Activated CD4-positive, alpha-beta T cell treated with anti-CD3 and anti-CD28 coated beads, Interleukin-2, amount 10 ng/mL, durations not matched to agents 24 days and 14 days (primary cell): ENCODE measurements at regions of chr1 and their contacts with region 1.

Region 1: DNA sequence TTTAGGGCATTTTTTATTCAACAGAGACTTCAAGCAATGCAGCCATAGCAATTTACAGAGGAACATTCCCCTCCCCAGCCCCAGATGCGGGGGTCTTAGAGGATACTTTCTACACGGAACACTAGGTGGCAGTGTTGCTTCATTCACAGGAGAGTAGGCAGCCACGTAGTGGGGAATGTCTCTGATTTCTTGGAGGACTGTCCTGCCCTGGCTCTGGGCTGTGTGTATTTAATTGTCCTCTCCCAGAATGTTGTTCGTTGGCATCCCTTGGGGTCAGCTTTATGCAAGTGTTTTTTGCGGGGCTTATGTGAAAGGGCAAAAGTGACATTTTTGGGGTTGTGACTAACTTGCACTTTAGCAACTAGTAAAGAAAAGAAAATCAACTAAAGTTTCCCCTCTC is 96.9 kb downstream of the PAPPA2 start:
- DNase-seq: peak; percentile 71
- H3K4me3 Mint-ChIP-seq: no peak overlapping the region
- H3K27ac Mint-ChIP-seq: no peak overlapping the region
- H3K4me1 Mint-ChIP-seq: no peaks in the 10 kb centered on the region
- H3K27me3 Mint-ChIP-seq: no peaks in the 10 kb centered on the region

Region 2: GRCh38 chr1:176225911-176226310 is 334.0 kb before region 1 on chr1:
- intact Hi-C with region 1: no loop called
- DNase-seq: no peak
- H3K4me3 Mint-ChIP-seq: no peak overlapping the region
- H3K27ac Mint-ChIP-seq: no peak overlapping the region
- H3K4me1 Mint-ChIP-seq: no peaks in the 10 kb centered on the region
- H3K27me3 Mint-ChIP-seq: no peaks in the 10 kb centered on the region

Region 3: DNA sequence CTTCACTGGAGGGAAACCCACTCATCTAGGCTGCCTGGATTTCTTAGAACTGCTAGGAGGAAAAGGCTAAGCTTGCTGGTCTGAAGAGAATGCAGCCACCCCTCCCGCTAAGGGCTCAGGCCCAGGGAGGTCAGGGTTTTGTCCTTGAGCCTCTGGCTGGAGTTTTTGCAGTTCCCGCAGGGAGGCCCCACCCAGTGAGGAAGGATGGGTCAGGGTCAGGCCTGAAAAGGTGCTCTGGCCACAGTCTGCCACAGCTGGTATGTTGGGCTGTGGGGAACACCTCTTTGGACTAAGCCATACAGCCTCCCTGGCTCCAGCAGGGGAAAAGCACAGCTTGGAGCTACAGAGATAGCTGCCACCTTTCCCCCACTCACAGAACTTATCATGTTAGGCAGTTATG is 168.3 kb before region 1 on chr1:
- intact Hi-C with region 1: no loop called
- DNase-seq: no peak
- H3K4me3 Mint-ChIP-seq: no peak overlapping the region
- H3K27ac Mint-ChIP-seq: no peak overlapping the region
- H3K4me1 Mint-ChIP-seq: no peaks in the 10 kb centered on the region
- H3K27me3 Mint-ChIP-seq: no peaks in the 10 kb centered on the region

Region 4: DNA sequence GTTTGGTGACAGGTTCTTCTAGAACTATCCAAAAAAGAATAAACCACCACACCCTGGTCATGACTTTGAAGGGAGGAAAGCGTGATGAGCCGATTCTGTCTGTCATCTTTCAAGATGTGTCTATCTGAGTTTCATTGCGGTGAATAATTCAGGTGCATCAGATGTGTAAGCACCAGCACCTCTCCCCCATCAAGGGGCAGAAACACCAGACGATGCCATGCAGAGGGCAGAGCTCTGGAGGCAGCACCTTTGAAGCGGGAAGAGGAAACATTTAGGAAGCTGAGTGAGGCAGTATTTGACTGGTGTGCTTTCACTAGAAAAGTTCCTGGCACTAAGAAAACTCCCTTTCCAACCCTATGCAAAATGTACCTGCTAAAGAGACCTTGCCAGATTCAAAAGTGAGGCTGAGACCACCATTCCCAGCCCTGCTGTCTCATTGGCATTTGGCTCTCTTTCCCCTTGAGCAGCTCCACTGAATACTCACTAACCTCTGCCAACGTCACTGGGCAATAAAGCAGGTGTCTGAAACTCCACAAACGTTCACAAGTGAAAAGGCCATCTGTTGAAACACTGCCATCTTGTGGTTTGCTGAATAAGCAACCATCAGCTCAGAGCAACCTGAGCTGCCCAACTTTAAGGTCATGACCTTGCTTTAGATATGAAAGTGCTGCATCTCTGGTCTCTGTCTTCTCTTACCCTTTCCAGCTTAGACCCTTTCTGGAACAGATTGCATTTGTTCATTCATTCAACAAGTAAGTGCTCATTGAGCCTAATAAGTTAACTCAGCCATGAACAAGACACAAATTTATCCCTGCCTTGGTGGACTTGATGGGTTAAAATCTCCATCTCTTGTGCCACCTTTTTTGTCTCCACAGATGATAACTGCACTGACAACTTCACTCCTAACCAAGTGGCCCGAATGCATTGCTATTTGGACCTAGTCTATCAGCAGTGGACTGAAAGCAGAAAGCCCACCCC is 131.7 kb after region 1 on chr1:
- intact Hi-C with region 1: loop called (anchors 1 kb)
- DNase-seq: peak; percentile 72
- H3K4me3 Mint-ChIP-seq: no peak overlapping the region
- H3K27ac Mint-ChIP-seq: no peak overlapping the region
- H3K4me1 Mint-ChIP-seq: no peaks in the 10 kb centered on the region
- H3K27me3 Mint-ChIP-seq: no peaks in the 10 kb centered on the region

Region 5: GRCh38 chr1:176880954-176881595 is 321.2 kb after region 1 on chr1:
- intact Hi-C with region 1: loop called (anchors 1 kb)
- DNase-seq: peak; percentile 81
- H3K4me3 Mint-ChIP-seq: no peak overlapping the region
- H3K27ac Mint-ChIP-seq: no peak overlapping the region
- H3K4me1 Mint-ChIP-seq: no peaks in the 10 kb centered on the region
- H3K27me3 Mint-ChIP-seq: no peaks in the 10 kb centered on the region